GM13976 (cell line): ENCODE measurements at regions of chr18 and their contacts with region 1.

Region 1: GRCh38 chr18:59070181-59070912 is 69.3 kb upstream of the SEC11C start:
- DNase-seq: peak; percentile 74
- CTCF ChIP-seq: peak; percentile 77

Region 2: DNA sequence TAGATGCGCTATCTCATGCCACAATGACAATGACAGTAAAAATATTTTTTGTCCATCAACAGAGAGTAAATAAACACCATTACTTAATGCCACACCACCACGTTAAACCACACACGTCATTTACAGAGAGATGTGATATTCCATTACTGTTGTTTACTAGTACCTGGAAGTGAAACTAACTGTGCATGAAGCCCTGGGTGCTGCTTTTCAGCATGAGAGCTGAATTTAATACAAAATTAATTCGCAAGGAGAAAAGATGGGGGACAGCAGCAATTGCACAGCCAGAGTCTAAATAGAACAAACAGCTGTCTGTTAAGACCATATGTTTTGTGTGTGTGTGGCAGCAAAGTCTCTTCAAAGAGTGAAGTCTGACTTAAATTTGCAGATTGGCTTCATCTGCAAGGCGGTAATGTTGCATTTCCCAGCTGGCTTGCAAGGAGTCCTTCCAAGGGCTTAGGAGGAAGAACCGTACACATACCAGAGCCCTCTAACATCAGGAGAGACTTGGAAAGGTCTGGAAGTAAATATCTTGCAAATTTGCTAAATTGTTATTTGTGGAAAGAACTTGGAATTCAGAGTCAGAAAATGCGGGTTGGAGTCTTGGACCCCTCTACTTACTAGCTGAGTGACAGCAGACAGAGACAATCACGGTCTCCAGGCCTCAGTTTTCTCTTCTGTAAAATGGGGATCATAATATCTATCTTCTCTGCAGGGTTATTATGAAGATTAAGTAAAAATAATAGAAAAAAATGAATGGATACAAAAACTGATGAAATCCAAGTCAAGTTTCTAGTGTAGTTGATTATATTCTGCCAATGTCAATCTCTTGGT is 569.1 kb before region 1 on chr18:
- in situ Hi-C with region 1: loop called (anchors 25 kb)
- DNase-seq: peak; percentile 49
- CTCF ChIP-seq: no peak

Region 3: DNA sequence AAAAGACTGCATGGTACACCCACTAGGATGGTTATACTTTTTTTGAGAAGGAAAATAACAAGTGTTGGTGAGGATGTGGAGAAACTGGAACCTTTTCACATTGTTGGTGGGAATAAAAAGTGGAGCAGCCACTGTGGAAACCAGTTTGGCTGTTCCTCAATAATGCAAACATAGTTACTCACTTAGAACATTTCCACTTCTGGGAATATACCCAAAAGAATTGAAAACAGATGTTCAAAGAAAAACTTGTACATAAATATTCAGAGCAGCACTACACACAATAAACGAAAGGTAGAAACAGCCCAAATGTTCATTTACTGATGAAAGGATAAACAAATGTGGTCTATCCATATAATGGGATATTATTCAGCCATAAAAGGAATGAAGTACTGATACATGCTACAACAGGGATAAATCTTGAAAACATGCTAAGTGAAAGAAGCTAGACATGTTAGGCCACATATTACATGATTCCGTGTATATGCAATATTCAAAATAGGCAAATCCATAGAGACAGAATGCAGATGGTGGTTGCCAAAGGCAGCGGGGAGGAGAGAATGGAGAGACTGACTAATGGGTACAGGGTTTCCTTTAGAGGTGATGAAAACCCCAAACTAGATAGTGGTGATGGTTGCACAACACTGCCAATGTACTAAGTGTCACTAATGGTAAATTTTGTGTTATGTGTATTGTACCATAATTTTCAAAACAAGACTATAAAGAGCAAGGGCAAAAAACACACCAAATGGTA is 309.6 kb after region 1 on chr18:
- in situ Hi-C with region 1: no loop called
- DNase-seq: no peak
- CTCF ChIP-seq: no peak

Region 4: GRCh38 chr18:60146220-60146960 is 1076.0 kb after region 1 on chr18:
- in situ Hi-C with region 1: no loop called
- DNase-seq: no peak
- CTCF ChIP-seq: no peak